ENCODE measurements at regions of chr10 and their contacts with region 1.

Region 1: GRCh38 chr10:97355571-97355975 is 21.0 kb upstream of the FRAT2 start:
- DNase-seq: peak in 1 of 2 experiments; percentile 27
- H3K4me3 ChIP-seq: no peak overlapping the region
- H3K4me3 Mint-ChIP-seq: no peak overlapping the region
- H3K27ac Mint-ChIP-seq: peak overlapping the region; percentile 26
- H3K4me1 ChIP-seq: no peaks in the 10 kb centered on the region
- H3K4me1 Mint-ChIP-seq: no peaks in the 10 kb centered on the region
- H3K27me3 ChIP-seq: no peaks in the 10 kb centered on the region
- H3K27me3 Mint-ChIP-seq: no peaks in the 10 kb centered on the region
- CTCF ChIP-seq: peak; percentile 14 to 60

Region 2: DNA sequence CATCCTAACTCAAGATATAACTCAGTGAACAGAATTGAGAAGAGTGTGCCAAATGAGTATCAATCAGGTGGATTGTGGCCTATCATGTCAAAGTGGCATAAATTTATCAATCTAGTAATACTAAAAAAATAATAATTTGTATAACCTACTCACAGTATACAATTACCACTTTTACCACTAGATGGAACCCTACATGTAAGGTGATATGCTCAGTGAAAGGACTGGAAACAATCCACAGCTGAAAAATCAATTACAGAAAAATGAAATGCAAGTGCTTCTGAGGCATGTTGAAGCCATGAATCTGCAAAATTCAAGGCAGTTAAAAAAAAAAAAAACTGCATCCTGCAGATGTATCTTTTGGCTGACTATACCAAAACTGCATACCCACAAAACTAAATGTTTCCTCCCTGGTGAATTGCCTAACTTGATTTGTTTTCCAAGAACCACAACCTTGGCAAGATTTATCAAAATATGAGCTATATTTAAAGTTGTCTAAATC is 77.0 kb before region 1 on chr10:
- CTCF ChIA-PET with region 1: interaction called, 10 read pairs
- POLR2A ChIA-PET with region 1: no interaction called
- intact Hi-C with region 1: loop called (anchors 2 kb)
- DNase-seq: peak in 1 of 2 experiments; percentile 21
- H3K4me3 ChIP-seq: no peak overlapping the region
- H3K4me3 Mint-ChIP-seq: no peak overlapping the region
- H3K27ac Mint-ChIP-seq: no peak overlapping the region
- H3K4me1 ChIP-seq: 0 out of 2 replicates have a peak, but pooled peaks cover 4% of the 10 kb centered on the region
- H3K4me1 Mint-ChIP-seq: no peaks in the 10 kb centered on the region
- H3K27me3 ChIP-seq: no peaks in the 10 kb centered on the region
- H3K27me3 Mint-ChIP-seq: no peaks in the 10 kb centered on the region
- CTCF ChIP-seq: peak; percentile 54 to 59

Measured in Caco-2 (cell line).